ENCODE measurements at regions of chr1 and their contacts with region 1.

Region 1: GRCh38 chr1:35930593-35931445 is at the start of gene AGO3:
- H3K4me3 Mint-ChIP-seq: peak within 1 kb of the TSS; percentile 83
- H3K27ac Mint-ChIP-seq: peak within 1 kb of the TSS; percentile 96
- H3K4me1 Mint-ChIP-seq: peaks cover 16% of the 10 kb centered on the region
- H3K27me3 Mint-ChIP-seq: no peaks in the 10 kb centered on the region

Region 2: DNA sequence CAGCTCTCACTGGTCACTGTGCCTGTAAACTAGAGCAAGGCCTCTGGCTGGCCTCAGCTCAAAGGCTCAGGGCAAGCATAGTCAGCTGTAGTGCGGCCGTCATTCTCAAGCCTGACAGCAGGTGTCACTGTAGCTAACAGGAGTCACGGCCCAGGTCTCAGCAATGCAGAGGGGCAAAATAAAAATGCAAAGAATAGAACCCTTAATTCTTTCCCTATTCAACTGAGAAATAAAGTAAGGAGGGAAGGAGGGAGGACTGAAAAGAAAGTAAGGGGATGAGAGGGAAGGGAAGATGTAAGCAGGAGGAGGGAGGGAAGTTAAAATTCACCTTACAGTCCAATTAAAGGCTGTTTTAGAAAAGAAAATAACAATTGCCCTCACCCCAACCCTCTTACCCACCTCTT is 479.7 kb before region 1 on chr1:
- intact Hi-C with region 1: no loop called
- H3K4me3 Mint-ChIP-seq: no peak overlapping the region
- H3K27ac Mint-ChIP-seq: no peak overlapping the region
- H3K4me1 Mint-ChIP-seq: peaks cover 51% of the 10 kb centered on the region
- H3K27me3 Mint-ChIP-seq: no peaks in the 10 kb centered on the region

Region 3: GRCh38 chr1:35882945-35883634 is 47.7 kb before region 1 on chr1 and contains the start of gene AGO1:
- intact Hi-C with region 1: loop called (anchors 10 kb)
- H3K4me3 Mint-ChIP-seq: peak within 1 kb of the TSS; percentile 97
- H3K27ac Mint-ChIP-seq: peak within 1 kb of the TSS; percentile 88
- H3K4me1 Mint-ChIP-seq: peaks cover 48% of the 10 kb centered on the region
- H3K27me3 Mint-ChIP-seq: no peaks in the 10 kb centered on the region

Region 4: DNA sequence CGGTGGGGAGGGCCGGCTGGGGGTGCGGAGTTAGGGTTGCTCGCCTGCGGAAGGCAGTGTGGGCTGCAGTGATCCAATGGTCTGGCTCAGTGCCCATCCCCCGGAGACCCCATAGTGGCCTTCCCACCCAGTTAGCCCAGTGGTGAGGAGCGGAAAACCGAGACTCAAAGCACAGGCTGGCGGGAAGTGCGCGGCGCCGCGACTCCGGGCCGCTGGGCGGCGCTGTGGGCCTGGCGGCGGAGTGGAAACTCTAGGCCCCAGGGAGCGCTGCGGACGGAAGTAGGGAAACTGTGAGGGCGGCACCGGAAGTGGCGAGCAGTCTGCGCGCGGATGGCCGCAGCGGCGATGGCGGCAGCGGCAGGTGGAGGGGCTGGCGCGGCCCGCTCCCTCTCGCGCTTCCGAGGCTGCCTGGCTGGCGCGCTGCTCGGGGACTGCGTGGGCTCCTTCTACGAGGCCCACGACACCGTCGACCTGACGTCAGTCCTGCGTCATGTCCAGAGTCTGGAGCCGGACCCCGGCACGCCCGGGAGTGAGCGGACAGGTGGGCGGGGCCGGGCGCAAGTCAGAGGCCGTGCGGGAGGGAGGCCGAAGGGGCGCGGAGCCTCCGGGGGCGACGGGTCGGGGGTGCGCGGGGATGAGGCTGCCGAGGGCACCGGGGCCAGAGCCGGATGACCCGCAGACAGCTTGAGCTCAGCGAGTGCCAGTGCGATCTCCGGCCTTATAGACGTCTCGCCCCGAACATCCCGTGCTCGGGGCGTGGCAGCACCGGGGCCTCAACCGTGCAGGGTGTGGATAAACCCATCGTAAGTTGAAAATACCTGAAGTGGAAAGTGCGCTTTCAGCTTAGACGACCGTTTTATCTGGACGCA is 158.0 kb after region 1 on chr1 and contains the start of gene ADPRS:
- intact Hi-C with region 1: loop called (anchors 10 kb)
- H3K4me3 Mint-ChIP-seq: peak within 1 kb of the TSS; percentile 82
- H3K27ac Mint-ChIP-seq: peak within 1 kb of the TSS; percentile 92
- H3K4me1 Mint-ChIP-seq: peaks cover 39% of the 10 kb centered on the region
- H3K27me3 Mint-ChIP-seq: peaks cover 13% of the 10 kb centered on the region

Region 5: DNA sequence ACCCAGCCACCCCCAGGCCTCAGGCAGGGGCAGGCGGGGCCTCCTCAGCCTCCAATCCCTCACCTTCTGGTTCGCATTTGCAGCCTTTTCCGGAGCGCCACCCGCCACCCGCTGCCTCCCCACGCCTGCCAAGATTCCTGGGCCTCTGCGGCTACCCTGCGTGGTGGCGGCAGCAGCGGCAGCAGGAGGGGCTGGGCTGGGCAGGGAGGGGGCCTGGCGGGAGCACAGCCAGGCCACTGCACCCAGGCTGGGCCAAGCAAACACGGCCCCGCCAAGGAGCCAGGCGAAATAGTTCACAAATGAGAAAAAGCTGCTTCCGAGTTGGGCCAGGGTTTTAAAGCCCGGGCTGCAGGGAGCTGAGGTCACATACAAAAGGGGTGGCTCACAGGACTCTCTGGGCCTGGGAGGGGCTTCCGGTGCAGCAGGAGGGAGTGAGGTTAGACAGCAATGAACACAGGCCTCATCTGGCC is 184.4 kb after region 1 on chr1:
- intact Hi-C with region 1: no loop called
- H3K4me3 Mint-ChIP-seq: no peak overlapping the region
- H3K27ac Mint-ChIP-seq: no peak overlapping the region
- H3K4me1 Mint-ChIP-seq: peaks cover 43% of the 10 kb centered on the region
- H3K27me3 Mint-ChIP-seq: peaks cover 4% of the 10 kb centered on the region